ENCODE measurements at regions of chr6 and their contacts with region 1.

Region 1: DNA sequence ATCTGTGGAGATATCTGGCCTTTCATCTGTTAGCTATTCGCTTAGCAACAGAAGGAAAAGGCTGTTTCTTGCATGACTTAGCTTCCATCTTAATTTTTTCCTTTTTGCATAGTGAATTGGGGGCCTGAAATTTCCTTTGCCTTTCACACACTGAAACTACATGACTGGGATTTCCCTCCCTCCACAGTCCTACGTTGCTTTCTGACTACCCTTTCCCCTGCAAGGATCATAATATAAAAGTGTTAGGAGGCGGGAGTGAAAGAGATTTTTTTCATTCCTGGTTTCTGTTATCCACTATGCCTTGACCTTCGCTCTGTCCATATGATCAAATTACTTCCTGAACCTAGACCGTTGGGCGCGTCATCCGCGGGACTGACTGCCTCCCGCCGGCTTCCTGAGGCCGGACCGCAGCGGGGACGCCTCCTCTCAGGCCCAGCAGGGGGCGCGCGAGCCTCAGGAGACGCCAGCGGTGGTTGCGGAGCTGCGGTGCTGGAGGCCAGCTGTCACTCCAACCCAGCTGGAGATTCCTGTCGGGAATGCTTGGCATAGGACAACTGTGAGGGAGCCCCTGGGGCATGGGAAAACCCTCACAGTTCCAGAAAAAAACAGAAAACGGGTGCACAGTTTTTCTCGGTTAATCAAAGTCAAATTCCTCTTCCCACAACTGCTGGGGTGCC is 55.6 kb downstream of the MEP1A start:
- DNase-seq: peak; percentile 71
- ATAC-seq: peak; percentile 100
- H3K4me3 ChIP-seq: peak overlapping the region; percentile 3 to 19 (median 6); a peak in 2 of 6 replicates
- H3K27ac ChIP-seq: no peak overlapping the region
- H3K4me1 ChIP-seq: peaks cover 9% of the 10 kb centered on the region
- H3K27me3 ChIP-seq: peaks cover 0 to 10% of the 10 kb centered on the region in 2 experiments; a peak in 1 of 5 replicates
- CTCF ChIP-seq: peak; percentile 100
- EP300 ChIP-seq: no peak
- POLR2A ChIP-seq: no peak
- RAD21 ChIP-seq: peak; percentile 97

Region 2: DNA sequence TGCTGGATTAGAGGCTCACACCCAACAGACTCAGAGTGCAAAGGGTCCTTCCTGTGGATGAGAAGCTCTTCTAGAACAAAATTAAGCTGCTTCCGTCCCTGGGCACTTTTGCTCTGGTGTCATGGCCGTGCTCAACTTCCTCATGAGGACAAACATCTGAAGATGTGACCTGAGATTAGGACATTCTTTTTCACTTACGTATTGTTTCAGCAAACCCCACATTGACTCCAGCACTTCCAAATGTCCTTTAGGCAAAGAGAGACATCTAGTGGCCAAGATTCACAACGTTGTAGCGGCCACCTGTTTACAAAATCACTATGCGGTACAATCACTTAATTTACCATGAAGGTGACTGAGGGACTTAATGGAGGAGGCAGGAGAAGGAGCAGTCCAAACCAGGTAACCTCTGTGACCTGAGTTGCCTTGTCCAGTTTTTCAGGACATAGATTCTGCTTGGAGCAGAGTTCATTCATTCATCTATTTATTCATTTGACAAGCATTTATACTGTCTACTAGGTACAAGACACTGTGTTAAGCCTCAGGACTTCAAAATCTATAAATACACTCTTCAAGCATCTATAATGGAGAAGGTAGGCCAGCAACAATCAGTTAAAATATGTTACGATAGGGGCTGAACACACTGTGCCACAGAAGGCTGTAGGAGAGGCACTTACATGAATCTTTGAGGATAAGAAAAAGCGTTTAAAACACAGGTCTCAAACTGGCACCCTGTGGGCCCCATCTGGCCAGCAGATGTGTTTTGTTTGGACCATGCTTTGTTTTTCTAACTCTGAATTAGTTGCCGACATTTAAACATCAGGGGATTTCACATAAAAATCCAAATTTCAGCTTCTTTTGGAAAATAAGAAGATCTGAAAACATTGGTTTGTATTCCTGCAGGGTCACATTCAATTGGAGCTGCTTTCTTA is 198.9 kb after region 1 on chr6:
- CTCF ChIA-PET with region 1: interaction called, 7 read pairs
- POLR2A ChIA-PET with region 1: no interaction called
- in situ Hi-C with region 1: loop called (anchors 5 kb)
- intact Hi-C with region 1: loop called (anchors 1 kb)
- DNase-seq: peak; percentile 95
- ATAC-seq: peak; percentile 97
- H3K4me3 ChIP-seq: peak overlapping the region in 1 of 3 experiments; percentile 26; a peak in 1 of 6 replicates
- H3K27ac ChIP-seq: no peak overlapping the region
- H3K4me1 ChIP-seq: peaks cover 28% of the 10 kb centered on the region
- H3K27me3 ChIP-seq: peaks cover 2 to 4% of the 10 kb centered on the region in 2 experiments; a peak in 2 of 5 replicates
- CTCF ChIP-seq: peak; percentile 96
- EP300 ChIP-seq: peak in 1 of 2 experiments; percentile 31; a peak in 1 of 4 replicates
- POLR2A ChIP-seq: no peak
- RAD21 ChIP-seq: peak; percentile 82

Measured in HepG2 (cell line).